G401 (cell line): ENCODE measurements at regions of chr16 and their contacts with region 1.

Region 1: DNA sequence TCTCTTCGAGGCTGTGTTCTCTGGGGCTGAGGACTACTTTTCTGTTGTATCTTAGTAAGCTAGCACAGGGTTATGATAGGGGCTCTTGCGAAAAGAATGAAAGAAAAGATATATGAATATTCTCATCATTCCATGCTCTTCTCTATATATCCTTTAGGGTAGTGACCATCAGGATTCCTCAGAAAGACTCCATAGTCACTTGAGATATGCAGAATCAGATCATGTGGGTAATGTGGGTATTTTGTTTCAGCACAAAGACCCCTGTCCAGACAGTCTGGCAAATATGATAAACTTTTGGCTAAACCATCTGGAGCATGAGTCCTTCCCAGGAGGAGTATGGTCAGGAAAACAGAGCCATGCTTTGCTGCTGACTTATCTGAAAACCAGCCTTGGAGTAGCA is 21.5 kb downstream of the CRYM start:
- DNase-seq: no peak

Region 2: DNA sequence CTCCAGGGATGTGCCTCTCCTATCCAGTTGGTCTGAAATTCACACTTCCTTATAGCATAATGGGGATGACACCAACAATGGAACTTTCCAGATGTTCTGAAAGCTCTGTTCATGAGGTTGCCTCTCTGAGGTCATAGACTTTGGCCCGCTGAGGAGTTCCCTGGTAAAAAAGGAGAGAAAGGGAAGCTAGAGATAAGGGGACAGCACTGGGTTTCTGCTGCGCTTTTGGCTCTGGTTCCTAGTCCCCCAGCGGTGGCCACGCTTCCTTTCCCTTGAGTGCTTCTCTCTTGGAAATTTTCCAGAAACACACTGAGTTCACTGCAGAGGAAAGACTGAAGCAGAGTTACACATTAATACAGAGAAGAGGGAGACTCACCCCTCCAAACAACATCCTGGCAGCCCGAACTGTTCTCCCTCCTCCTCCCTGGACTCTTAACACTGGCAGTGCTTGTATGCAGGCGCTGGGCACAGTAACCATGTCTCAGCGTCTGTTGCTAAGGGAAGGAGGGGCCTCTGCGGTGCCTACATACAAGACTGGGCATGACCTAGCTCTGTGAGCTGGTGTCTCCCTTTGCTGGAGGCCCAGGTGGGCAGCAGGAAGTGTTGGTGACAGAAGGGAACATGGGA is 106.1 kb before region 1 on chr16 and contains the start of gene DNAH3:
- in situ Hi-C with region 1: no loop called
- DNase-seq: no peak
- total RNA-seq, gene DNAH3: not detected in 2 replicates

Region 3: DNA sequence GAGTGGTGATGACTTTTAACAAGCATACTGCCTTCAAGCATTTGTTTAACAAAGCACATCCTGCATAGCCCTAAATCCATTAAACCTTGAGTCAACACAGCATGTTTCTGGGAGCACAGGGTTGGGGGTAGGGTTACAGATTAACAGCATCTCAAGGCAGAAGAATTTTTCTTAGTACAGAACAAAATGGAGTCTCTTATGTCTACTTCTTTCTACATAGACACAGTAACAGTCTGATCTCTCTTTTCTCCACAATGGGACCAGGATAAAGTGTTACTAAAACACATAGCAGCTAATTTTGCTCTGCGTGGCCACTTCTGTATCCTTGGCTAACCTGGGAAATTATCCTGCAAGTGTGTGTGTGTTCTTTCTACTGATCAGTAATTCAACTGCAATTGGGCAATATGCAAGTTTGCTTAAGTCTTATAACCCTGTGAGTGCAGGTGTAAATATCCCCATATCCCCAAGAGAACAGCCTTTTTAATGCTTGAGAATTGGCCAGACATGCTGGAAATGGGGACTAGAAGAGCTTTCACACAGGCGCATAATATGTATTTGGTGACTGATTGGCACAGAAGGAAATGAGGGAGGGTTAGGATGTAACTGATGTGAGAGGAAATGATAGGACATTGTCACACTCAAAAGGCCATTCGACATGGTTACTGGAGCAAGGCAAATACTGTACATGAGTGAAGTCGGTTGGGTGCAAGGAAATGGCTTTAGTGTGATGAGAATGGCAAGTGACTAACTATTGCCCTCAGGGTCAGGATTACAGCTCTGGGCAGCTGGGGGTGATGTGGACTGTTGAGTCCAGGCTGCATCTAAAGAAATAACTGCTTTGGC is 33.9 kb before region 1 on chr16:
- in situ Hi-C with region 1: loop called (anchors 5 kb)
- DNase-seq: no peak